Right lobe of liver (tissue), 6 donors: ENCODE measurements at regions of chr9 and their contacts with region 1.

Region 1: GRCh38 chr9:83204047-83204446 is 141.1 kb upstream of the RASEF start:
- DNase-seq: no peak
- ATAC-seq: peak in 3 of 4 donors; percentile 37 to 50 (median 38)
- H3K4me3 ChIP-seq: no peak overlapping the region
- H3K27ac ChIP-seq: no peak overlapping the region
- H3K4me1 ChIP-seq: no peaks in the 10 kb centered on the region
- H3K27me3 ChIP-seq: no peaks in the 10 kb centered on the region
- CTCF ChIP-seq: peak in 3 of 4 donors; percentile 21 to 24 (median 22)
- POLR2A ChIP-seq: no peak

Region 2: DNA sequence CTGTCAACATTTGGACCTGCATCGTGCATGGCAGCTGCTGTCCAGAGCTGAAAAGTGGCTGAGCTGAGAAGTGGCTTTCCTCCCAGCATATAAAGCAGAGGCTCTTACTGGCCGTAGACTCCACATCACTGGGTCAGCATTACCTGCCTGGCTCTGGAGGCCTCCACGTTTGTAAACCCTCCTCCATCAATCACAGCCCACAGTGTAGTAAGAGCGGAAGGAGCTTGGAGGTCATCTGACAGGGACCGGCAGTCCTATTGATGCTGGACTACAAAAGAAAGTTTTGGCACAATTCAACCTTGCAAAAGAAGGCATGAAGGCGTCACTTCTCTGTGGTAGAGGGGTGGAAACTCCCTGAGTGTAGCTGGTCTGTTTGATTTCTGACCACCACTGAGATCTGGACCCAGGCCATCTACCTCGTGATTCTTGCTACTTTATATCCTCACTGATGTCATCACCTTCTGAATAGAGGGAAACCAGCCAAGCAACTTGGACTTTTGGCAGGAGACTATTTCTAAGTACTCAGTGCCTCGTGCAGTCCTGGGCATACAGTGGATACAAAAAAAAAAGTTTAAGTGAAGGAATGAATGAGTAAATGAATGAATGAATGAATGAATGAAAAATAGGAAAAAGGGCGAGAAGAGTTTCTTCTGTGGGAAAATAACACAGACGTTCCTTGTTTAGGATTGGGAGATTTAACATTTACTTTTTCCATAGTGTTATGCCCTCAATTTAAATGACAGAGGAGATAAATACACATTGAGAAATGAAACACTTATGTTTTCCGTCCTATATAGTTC is 155.9 kb before region 1 on chr9:
- intact Hi-C with region 1: no loop called
- DNase-seq: peak in 1 of 3 donors; percentile 44
- ATAC-seq: peak in 3 of 4 donors; percentile 23 to 41 (median 39)
- H3K4me3 ChIP-seq: no peak overlapping the region
- H3K27ac ChIP-seq: no peak overlapping the region
- H3K4me1 ChIP-seq: no peaks in the 10 kb centered on the region
- H3K27me3 ChIP-seq: no peaks in the 10 kb centered on the region
- CTCF ChIP-seq: no peak
- POLR2A ChIP-seq: no peak

Region 3: GRCh38 chr9:83554278-83554677 is 350.2 kb after region 1 on chr9:
- intact Hi-C with region 1: loop called in 1 of 2 experiments (anchors 10 kb)
- DNase-seq: no peak
- ATAC-seq: peak in 1 of 4 donors; percentile 40
- H3K4me3 ChIP-seq: no peak overlapping the region
- H3K27ac ChIP-seq: no peak overlapping the region
- H3K4me1 ChIP-seq: no peaks in the 10 kb centered on the region
- H3K27me3 ChIP-seq: no peaks in the 10 kb centered on the region
- CTCF ChIP-seq: no peak
- POLR2A ChIP-seq: no peak